ENCODE measurements at regions of chr20 and their contacts with region 1.

Region 1: DNA sequence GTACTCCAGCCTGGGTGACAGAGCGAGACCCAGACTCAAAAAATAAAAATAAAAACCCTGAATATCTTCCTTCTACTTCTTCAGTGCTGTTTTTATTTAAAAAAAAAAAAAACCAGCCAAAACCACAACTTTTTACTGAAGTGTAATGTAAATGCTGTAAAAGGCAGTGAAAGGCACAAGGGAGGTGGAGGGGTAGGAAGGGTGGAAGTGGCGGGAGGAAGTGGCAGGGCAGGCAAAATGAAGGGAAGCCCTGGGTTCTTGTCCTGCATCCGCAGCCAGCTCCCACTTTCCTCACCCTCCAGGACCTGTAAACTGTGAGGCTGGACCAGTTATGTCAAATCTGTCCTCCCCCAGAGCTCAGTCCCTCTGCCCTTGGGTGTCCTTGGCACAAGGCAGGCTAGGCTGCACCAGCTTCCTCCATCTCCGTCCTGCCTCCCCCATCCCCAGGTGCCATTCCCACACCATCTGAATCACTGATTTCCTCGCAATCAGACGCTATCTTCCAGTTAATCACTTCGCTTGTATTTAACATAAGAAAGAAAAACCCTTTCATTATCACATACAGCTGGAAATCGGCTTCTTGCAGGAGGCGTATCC is 13.7 kb upstream of the PANK2 start:
- DNase-seq: no peak
- H3K4me3 Mint-ChIP-seq: no peak overlapping the region
- H3K27ac Mint-ChIP-seq: no peak overlapping the region
- H3K4me1 Mint-ChIP-seq: peaks cover 18% of the 10 kb centered on the region
- H3K27me3 Mint-ChIP-seq: no peaks in the 10 kb centered on the region

Region 2: DNA sequence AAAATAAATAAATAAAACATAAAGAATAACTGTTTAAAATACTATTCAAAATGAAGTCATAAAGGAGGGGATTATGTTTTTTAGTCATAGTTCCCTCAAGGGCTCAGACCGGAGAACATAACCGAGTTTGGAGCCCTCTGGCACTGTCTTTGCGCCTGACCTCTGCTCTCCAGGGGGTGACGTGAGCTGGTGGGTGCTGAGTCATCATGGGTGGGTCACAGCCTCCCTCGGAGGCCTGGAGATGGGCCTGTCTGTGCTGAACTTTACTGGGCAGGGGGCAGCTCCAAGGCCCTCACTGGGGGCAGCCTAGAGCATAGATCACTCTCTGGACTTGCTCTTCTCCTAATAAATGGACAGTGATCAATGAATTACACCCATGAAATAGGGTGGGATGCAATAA is 32.0 kb before region 1 on chr20:
- CTCF ChIA-PET with region 1: no interaction called
- POLR2A ChIA-PET with region 1: no interaction called
- DNase-seq: no peak
- H3K4me3 Mint-ChIP-seq: no peak overlapping the region
- H3K27ac Mint-ChIP-seq: no peak overlapping the region
- H3K4me1 Mint-ChIP-seq: peaks cover 41% of the 10 kb centered on the region
- H3K27me3 Mint-ChIP-seq: no peaks in the 10 kb centered on the region

Region 3: GRCh38 chr20:3854462-3854871 is 21.0 kb before region 1 on chr20:
- CTCF ChIA-PET with region 1: interaction called, 13 read pairs
- POLR2A ChIA-PET with region 1: no interaction called
- DNase-seq: no peak
- H3K4me3 Mint-ChIP-seq: no peak overlapping the region
- H3K27ac Mint-ChIP-seq: peak overlapping the region; percentile 25
- H3K4me1 Mint-ChIP-seq: peaks cover 12% of the 10 kb centered on the region
- H3K27me3 Mint-ChIP-seq: no peaks in the 10 kb centered on the region

Region 4: GRCh38 chr20:3911956-3912355 is 36.5 kb after region 1 on chr20:
- CTCF ChIA-PET with region 1: no interaction called
- POLR2A ChIA-PET with region 1: no interaction called
- DNase-seq: no peak
- H3K4me3 Mint-ChIP-seq: no peak overlapping the region
- H3K27ac Mint-ChIP-seq: no peak overlapping the region
- H3K4me1 Mint-ChIP-seq: peaks cover 35% of the 10 kb centered on the region
- H3K27me3 Mint-ChIP-seq: no peaks in the 10 kb centered on the region

Measured in activated CD4-positive, alpha-beta T cell treated with anti-CD3 and anti-CD28 coated beads, Interleukin-2, amount 10 ng/mL, durations not matched to agents 7 days and 5 days (primary cell).